Transverse colon (tissue), 4 donors: ENCODE measurements at regions of chr3 and their contacts with region 1.

Region 1: DNA sequence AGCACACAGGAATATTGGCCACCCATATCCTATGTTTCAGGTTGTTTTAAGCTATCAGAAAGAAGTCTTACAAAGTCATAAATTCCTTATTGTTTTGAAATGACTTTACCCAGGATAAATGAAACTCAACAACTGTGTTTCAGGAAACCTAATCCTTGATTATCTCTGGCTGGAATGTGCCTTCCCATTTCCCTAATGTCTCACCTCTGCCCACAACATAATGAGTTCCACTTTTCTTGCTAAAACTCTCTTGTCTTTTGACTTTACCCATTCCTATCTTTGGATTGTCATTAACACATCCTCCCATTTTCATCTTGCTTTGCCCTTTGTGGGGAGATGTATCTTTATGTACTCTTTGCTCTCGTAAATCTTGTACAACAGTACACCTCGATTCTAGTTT is 200.0 kb upstream of the DNAJC19 start:
- DNase-seq: no peak
- H3K4me3 ChIP-seq: no peak overlapping the region
- H3K27ac ChIP-seq: no peak overlapping the region
- H3K4me1 ChIP-seq: no peaks in the 10 kb centered on the region
- H3K27me3 ChIP-seq: no peaks in the 10 kb centered on the region
- CTCF ChIP-seq: no peak
- EP300 ChIP-seq: no peak
- POLR2A ChIP-seq: no peak

Region 2: DNA sequence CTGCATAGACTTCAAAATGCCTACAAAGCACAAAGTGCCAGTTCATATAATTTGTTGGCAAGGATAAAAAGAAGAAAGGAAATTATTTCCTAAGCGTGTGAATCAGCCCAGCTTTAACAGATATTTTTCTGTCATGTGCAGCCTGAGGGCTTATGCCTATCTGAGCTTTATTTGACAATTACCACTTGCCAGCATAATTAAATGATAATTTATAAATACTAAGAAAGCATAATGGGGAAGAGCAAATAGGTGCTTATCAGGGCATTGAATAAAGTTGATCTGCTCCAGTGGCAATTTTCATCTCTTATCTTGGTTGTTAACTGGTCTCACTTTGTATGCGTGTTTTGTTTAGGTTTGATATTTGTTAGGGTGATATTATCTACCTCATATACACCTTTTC is 113.4 kb after region 1 on chr3:
- in situ Hi-C with region 1: no loop called
- intact Hi-C with region 1: no loop called
- DNase-seq: no peak
- H3K4me3 ChIP-seq: no peak overlapping the region
- H3K27ac ChIP-seq: no peak overlapping the region
- H3K4me1 ChIP-seq: no peaks in the 10 kb centered on the region
- H3K27me3 ChIP-seq: no peaks in the 10 kb centered on the region
- CTCF ChIP-seq: no peak
- EP300 ChIP-seq: no peak
- POLR2A ChIP-seq: no peak

Region 3: GRCh38 chr3:181855825-181856224 is 666.3 kb after region 1 on chr3:
- in situ Hi-C with region 1: no loop called
- intact Hi-C with region 1: loop called (anchors 5 kb)
- DNase-seq: no peak
- H3K4me3 ChIP-seq: no peak overlapping the region
- H3K27ac ChIP-seq: no peak overlapping the region
- H3K4me1 ChIP-seq: no peaks in the 10 kb centered on the region
- H3K27me3 ChIP-seq: no peaks in the 10 kb centered on the region
- CTCF ChIP-seq: no peak
- EP300 ChIP-seq: no peak
- POLR2A ChIP-seq: no peak

Region 4: GRCh38 chr3:182999767-183000166 is 1810.2 kb after region 1 on chr3:
- in situ Hi-C with region 1: no loop called
- intact Hi-C with region 1: no loop called
- DNase-seq: no peak
- H3K4me3 ChIP-seq: no peak overlapping the region
- H3K27ac ChIP-seq: no peak overlapping the region
- H3K4me1 ChIP-seq: no peaks in the 10 kb centered on the region
- H3K27me3 ChIP-seq: no peaks in the 10 kb centered on the region
- CTCF ChIP-seq: no peak
- EP300 ChIP-seq: no peak
- POLR2A ChIP-seq: no peak